Activated T-helper 1 cell treated with anti-CD3 and anti-CD28 coated beads, Interleukin-12 subunit alpha, Interleukin-12 subunit beta, Interleukin-2, Interleukin-4 antibody, amounts not matched to agents 30 ng/mL and 10 ng/mL and 1 ng/mL, durations not matched to agents 14 hours and 24 hours and 36 hours (primary cell): ENCODE measurements at regions of chr3 and their contacts with region 1.

Region 1: DNA sequence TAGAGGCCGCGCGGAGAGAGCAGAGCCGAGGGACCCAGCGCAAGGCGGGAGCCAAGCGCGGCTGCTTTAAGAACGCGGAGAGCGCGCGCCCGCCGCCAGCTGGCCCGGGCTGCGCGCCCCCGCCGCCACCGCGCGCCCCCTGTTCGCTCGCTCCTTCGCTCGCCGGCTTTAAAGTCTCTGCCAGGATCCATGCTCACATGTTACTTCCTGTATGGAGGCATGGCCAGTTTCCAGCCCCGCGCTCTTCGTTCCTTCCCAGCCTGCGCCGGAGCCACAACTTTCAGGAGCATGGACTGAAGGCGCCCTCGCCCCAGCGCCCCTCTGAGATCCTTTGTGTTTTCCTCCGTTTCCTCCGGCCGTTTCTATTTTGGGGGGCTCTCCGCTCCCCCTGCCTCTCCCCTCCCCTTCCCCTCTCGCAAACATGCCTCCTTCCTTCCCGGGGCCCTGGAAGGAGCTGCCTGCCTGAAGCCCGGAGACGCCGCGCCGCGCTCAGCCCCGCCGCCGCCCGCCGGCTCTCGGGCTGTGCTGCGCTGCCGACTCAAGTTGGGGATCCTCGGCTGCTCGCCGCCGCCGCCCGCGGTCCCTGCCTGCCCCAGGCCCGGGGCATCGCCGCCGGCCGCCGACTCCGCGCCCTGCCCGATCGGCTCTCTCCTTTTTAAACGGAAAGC is at the start of gene PTPRG:
- DNase-seq: peak; percentile 37
- H3K4me3 Mint-ChIP-seq: peak within 1 kb of the TSS; percentile 93
- H3K27ac Mint-ChIP-seq: peak within 1 kb of the TSS; percentile 74
- H3K4me1 Mint-ChIP-seq: peaks cover 12% of the 10 kb centered on the region
- H3K27me3 Mint-ChIP-seq: peaks cover 57% of the 10 kb centered on the region
- total RNA-seq, gene PTPRG: 3.7 and 4.4 TPM in 2 replicates

Region 2: DNA sequence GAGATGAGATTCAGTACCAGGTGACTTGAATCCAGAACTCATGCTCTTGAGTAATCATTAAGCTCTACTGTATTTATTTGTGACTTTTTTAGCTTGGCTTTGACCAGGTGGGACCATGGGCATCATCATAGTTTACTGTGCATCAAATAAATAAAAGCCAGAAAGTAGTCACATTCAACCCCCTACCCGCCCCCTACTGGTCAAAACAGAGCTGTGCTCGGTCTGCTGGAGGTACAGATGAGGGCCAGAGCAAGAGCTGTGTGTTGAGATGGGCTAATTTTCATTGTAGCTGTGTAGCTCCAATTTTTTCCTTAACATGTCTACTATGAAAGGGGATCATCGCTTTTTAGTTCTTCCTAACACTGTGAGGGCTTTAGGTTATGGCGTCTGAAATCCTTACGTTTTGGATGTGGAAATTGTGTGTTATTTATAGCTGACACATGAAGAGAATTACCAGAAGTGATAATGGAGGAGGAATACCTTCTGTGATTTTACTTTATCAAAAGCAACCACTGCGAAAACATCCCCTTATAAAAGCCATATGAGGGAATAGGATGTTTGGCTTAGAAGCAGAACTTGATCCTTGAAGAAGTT is 374.9 kb after region 1 on chr3:
- intact Hi-C with region 1: loop called (anchors 5 kb)
- DNase-seq: no peak
- H3K4me3 Mint-ChIP-seq: no peak overlapping the region
- H3K27ac Mint-ChIP-seq: no peak overlapping the region
- H3K4me1 Mint-ChIP-seq: no peaks in the 10 kb centered on the region
- H3K27me3 Mint-ChIP-seq: no peaks in the 10 kb centered on the region

Region 3: DNA sequence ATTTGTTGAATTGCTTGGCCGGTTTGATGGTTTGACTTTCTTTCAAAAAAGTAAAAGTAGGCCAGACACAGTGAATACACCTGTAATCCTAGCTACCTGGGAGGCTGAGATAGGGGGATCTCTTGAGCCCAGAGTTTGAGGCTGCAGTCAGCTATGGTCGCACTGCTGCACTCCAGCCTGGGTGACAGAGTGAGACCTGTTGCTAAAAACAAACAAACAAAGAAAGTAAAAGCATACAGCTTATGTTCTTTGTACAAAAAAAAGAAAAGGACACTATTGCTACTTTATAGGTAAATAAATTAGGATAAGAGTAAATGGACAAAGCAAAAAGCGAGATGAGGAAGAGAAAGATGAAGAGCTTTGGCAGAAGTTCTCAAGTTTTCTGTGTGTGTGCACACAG is 825.7 kb after region 1 on chr3:
- intact Hi-C with region 1: no loop called
- DNase-seq: no peak
- H3K4me3 Mint-ChIP-seq: no peak overlapping the region
- H3K27ac Mint-ChIP-seq: no peak overlapping the region
- H3K4me1 Mint-ChIP-seq: no peaks in the 10 kb centered on the region
- H3K27me3 Mint-ChIP-seq: peaks cover 2% of the 10 kb centered on the region